ENCODE measurements at regions of chr21 and their contacts with region 1.

Region 1: GRCh38 chr21:16082038-16082816 is 352.4 kb downstream of the USP25 start:
- DNase-seq: no peak
- H3K4me3 Mint-ChIP-seq: no peak overlapping the region
- H3K27ac Mint-ChIP-seq: no peak overlapping the region
- H3K4me1 Mint-ChIP-seq: no peaks in the 10 kb centered on the region
- H3K27me3 Mint-ChIP-seq: no peaks in the 10 kb centered on the region

Region 2: DNA sequence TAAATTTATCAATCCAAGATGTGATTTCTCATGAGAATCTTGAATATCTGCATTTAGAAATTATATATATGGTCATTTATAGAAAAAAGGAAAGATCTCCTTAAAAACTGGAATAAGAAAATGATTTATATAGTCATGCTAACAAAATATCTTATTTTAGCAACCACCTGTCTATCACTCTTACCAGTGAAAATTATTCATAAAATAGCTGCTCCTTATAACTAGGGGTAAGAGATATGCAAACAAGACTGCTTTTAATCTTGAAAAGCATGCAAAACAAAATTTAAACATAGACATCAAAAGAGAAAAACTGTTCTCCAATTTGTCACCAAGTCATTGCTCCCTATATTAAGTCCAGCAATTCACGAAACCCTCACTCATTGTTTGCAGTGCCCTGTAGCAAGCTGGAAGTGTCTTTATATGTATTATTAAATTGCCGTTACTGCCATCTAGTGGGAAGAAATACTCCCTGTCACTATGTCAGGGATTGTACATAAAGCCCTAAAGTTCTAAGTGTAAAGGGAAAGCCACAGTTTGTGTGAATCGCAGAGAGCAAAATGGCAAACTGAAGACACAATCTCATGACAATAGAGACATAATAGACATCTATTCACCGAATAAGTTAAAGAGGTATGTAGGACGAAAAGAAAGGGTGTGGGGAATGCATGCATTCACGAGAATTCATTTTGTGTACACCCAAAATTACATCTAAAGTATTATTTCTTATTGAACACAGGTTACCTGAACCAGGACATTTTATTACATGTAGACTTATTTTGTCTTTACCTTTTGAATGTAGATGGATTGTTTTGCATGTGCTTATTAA is 248.1 kb after region 1 on chr21:
- intact Hi-C with region 1: loop called (anchors 2 kb)
- DNase-seq: no peak
- H3K4me3 Mint-ChIP-seq: no peak overlapping the region
- H3K27ac Mint-ChIP-seq: no peak overlapping the region
- H3K4me1 Mint-ChIP-seq: no peaks in the 10 kb centered on the region
- H3K27me3 Mint-ChIP-seq: no peaks in the 10 kb centered on the region

Measured in activated T-helper 2 cell treated with anti-CD3 and anti-CD28 coated beads, Interferon-gamma antibody, Interleukin-2, Interleukin-4, amounts not matched to agents 10 μg/mL and 5 μg/mL and 100 μg/mL, durations not matched to agents 14 hours and 24 hours and 36 hours (primary cell).